ENCODE measurements at regions of chr18 and their contacts with region 1.

Region 1: GRCh38 chr18:59021500-59021899 is 118.2 kb upstream of the SEC11C start:
- DNase-seq: peak in 1 of 10 donors; percentile 30
- H3K4me3 ChIP-seq: peak overlapping the region in 1 of 59 donors; percentile 1
- H3K27ac ChIP-seq: peak overlapping the region in 51 of 59 donors; percentile 7 to 88 (median 73)
- H3K27me3 ChIP-seq: no peaks in the 10 kb centered on the region
- CTCF ChIP-seq: no peak

Region 2: GRCh38 chr18:58998401-58999203 is 22.9 kb before region 1 on chr18:
- intact Hi-C with region 1: loop called in 1 of 2 experiments (anchors 1 kb)
- DNase-seq: peak in 8 of 10 donors; percentile 51 to 84 (median 68)
- H3K4me3 ChIP-seq: peak overlapping the region in 31 of 59 donors; percentile 1 to 37 (median 22)
- H3K27ac ChIP-seq: peak overlapping the region in 46 of 59 donors; percentile 1 to 86 (median 56)
- H3K27me3 ChIP-seq: no peaks in the 10 kb centered on the region
- CTCF ChIP-seq: no peak

Region 3: GRCh38 chr18:59233017-59233410 is 211.5 kb after region 1 on chr18:
- intact Hi-C with region 1: no loop called
- DNase-seq: no peak
- H3K4me3 ChIP-seq: no peak overlapping the region
- H3K27ac ChIP-seq: no peak overlapping the region
- H3K27me3 ChIP-seq: peaks cover 0 to 4% (median 0%) of the 10 kb centered on the region in 45 donors
- CTCF ChIP-seq: no peak

Region 4: DNA sequence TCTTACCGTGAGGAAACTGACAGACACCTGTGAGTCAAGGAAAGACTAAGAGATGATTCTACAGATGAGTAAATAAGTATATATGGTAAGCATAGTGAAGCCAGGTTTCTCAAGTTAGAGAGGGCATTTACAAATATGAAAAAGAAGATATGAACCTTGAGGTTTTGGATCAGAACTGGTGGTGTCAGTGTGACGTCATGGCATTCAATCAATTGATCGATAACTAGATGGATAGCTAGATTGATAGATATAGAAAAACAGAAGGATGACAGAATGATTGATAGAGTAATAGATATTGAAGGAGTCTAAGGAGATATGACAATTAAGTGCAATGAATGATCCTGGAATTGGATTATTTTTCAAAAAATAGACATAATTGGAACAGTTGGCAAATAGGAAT is 1701.2 kb after region 1 on chr18:
- intact Hi-C with region 1: no loop called
- DNase-seq: no peak
- H3K4me3 ChIP-seq: no peak overlapping the region
- H3K27ac ChIP-seq: no peak overlapping the region
- H3K27me3 ChIP-seq: no peaks in the 10 kb centered on the region
- CTCF ChIP-seq: no peak

Measured in dorsolateral prefrontal cortex (tissue), 120 donors.